IMR-90 (cell line): ENCODE measurements at regions of chr6 and their contacts with region 1.

Region 1: GRCh38 chr6:114108119-114109002 is 137.4 kb upstream of the HDAC2 start:
- DNase-seq: peak; percentile 68
- ATAC-seq: peak; percentile 99
- H3K4me3 ChIP-seq: no peak overlapping the region
- H3K27ac ChIP-seq: no peak overlapping the region
- H3K4me1 ChIP-seq: no peaks in the 10 kb centered on the region
- H3K27me3 ChIP-seq: peaks cover 6% of the 10 kb centered on the region
- CTCF ChIP-seq: peak; percentile 86
- POLR2A ChIP-seq: no peak
- RAD21 ChIP-seq: peak; percentile 72

Region 2: DNA sequence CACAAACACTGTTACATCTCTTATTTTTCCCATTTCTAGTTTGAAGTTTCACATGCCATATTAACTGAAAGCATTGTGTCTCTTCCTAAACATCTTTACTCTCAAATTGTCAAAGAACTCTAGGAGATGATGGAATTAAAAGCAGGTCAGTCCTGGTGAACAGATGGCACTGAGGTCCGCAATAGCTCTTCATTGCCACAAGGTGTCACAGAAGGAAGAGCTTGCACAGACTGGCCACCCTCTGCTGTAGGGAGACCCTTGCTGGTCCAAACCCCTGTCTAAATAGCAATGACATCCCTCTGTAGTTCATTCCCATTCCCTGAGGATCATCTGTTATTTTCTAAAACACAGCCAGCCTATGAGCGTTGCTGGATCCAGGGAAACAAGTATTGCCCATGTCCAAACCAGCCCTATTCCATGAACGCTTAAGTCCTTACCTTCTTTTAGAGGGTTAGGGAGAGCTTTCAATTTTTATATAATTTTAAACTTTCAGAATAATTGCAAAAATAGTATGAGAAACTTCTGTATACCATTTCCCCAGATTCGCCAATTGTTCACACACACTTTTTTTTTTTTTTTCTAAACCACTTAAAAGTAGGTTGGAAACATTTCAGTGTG is 127.3 kb before region 1 on chr6:
- CTCF ChIA-PET with region 1: interaction called, 12 read pairs
- POLR2A ChIA-PET with region 1: no interaction called
- dilution Hi-C with region 1: no loop called
- in situ Hi-C with region 1: no loop called
- intact Hi-C with region 1: loop called (anchors 1 kb)
- DNase-seq: peak; percentile 31
- ATAC-seq: peak; percentile 82
- H3K4me3 ChIP-seq: no peak overlapping the region
- H3K27ac ChIP-seq: no peak overlapping the region
- H3K4me1 ChIP-seq: no peaks in the 10 kb centered on the region; the same call in 1 of the 2 replicates
- H3K27me3 ChIP-seq: no peaks in the 10 kb centered on the region
- CTCF ChIP-seq: peak; percentile 47
- POLR2A ChIP-seq: no peak
- RAD21 ChIP-seq: peak; percentile 54

Region 3: DNA sequence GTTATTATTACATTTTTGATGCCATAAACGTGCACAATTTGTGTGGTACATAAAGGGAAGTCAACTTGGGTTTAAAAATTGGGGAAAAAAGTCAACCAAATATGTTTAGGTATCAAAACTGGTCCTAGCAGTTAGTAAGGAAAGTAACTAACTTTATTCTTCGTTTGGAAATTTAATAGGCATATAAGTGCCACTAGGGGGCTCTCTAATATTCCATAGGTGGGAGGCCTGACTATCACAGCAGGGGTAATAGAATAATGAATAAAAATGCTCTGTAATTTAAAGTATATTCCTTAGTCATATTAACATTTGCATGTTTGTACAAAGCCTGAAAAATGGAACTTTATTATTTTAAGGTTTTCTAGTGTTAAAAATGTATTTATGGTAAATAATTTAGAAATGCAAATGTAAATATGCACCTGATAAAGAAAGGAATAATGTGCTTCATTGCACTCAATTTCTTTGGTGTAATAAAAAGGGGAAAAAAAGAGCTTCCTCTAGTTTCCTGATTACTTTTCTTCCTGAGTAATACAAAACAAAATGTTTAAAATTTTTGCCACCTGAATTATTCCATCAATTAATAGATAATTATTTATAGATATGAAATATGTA is 11.7 kb before region 1 on chr6:
- CTCF ChIA-PET with region 1: interaction called, 12 read pairs
- POLR2A ChIA-PET with region 1: no interaction called
- dilution Hi-C with region 1: no loop called
- in situ Hi-C with region 1: no loop called
- intact Hi-C with region 1: no loop called
- DNase-seq: peak; percentile 28
- ATAC-seq: no peak
- H3K4me3 ChIP-seq: no peak overlapping the region
- H3K27ac ChIP-seq: no peak overlapping the region
- H3K4me1 ChIP-seq: peaks cover 4% of the 10 kb centered on the region
- H3K27me3 ChIP-seq: no peaks in the 10 kb centered on the region
- CTCF ChIP-seq: peak; percentile 72
- POLR2A ChIP-seq: no peak
- RAD21 ChIP-seq: peak; percentile 56

Region 4: DNA sequence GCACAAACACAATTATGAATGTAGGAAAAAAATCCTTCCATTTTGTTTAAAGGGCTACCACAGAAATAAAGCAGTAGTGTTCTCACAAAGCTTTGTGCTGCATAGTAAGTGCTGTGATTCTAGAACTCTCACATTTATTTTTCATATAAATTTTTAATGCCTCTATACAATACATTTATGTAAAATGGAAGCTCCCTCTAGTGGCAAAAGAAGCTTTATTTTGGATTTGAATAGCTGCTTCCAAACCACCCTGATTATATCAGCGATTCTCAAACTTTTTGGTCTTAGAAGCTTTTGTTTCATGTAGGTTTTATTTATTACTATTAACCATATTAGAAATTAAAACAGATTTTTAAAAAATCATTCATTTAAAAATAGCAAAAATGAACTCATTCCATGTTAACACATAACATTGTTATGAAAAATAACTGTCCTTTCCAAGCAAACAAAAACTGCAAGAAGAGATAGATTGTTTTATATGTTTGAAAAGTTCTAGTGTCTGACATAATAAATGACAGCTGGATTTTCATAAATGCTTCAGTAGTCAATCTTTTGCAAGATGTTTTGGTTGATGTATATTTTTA is 196.0 kb after region 1 on chr6:
- CTCF ChIA-PET with region 1: interaction called, 4 read pairs
- POLR2A ChIA-PET with region 1: no interaction called
- dilution Hi-C with region 1: no loop called
- in situ Hi-C with region 1: no loop called
- intact Hi-C with region 1: loop called (anchors 5 kb)
- DNase-seq: peak; percentile 24
- ATAC-seq: peak; percentile 66
- H3K4me3 ChIP-seq: no peak overlapping the region
- H3K27ac ChIP-seq: no peak overlapping the region
- H3K4me1 ChIP-seq: no peaks in the 10 kb centered on the region
- H3K27me3 ChIP-seq: no peaks in the 10 kb centered on the region
- CTCF ChIP-seq: peak; percentile 55
- POLR2A ChIP-seq: no peak
- RAD21 ChIP-seq: peak; percentile 22; the same call in 1 of the 2 replicates